SK-N-SH (cell line): ENCODE measurements at regions of chr15 and their contacts with region 1.

Region 1: GRCh38 chr15:100873029-100873677 is 6.5 kb upstream of the ALDH1A3 start:
- DNase-seq: peak; percentile 76
- H3K4me3 ChIP-seq: peak overlapping the region in 1 of 2 experiments; percentile 36; a peak in 1 of 4 replicates
- H3K27ac ChIP-seq: no peak overlapping the region; a peak in 1 of 4 replicates
- H3K4me1 ChIP-seq: peaks cover 0 to 12% of the 10 kb centered on the region in 2 experiments; a peak in 1 of 4 replicates
- H3K27me3 ChIP-seq: no peaks in the 10 kb centered on the region
- CTCF ChIP-seq: peak; percentile 91
- EP300 ChIP-seq: no peak
- RAD21 ChIP-seq: peak; percentile 83

Region 2: GRCh38 chr15:100093211-100094126 is 779.7 kb before region 1 on chr15:
- CTCF ChIA-PET with region 1: no interaction called
- POLR2A ChIA-PET with region 1: no interaction called
- DNase-seq: no peak
- H3K4me3 ChIP-seq: no peak overlapping the region
- H3K27ac ChIP-seq: no peak overlapping the region
- H3K4me1 ChIP-seq: no peaks in the 10 kb centered on the region; a peak in 1 of 4 replicates
- H3K27me3 ChIP-seq: no peaks in the 10 kb centered on the region
- CTCF ChIP-seq: no peak
- EP300 ChIP-seq: no peak
- RAD21 ChIP-seq: no peak

Region 3: DNA sequence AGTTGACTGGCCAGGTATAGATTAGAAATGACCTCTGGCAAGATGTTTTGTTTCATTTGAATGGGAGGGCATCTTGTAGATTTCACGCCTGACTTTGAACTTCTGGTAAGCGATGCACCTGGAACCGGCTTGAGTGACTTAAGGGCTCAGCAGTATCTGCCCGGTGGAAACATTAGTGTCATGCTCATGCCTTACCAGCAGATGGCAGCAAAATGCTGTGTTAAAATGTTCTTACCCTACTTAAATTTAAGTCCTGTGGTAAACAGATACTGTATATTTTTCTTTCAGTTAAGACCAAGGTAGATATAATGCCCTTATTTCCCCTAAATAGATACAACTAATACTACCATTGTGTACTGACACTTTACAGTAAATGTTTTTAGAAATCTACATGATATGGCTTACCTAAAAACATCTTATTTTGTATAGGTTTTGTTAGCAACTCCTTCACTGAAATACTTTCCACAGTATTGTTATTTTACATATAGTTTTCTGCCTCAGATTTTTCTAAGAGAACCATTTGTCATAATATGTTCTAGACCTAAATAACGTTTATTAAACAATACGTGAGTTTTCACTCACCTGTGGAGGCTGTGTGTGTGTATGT is 245.3 kb before region 1 on chr15:
- CTCF ChIA-PET with region 1: interaction called, 10 read pairs
- POLR2A ChIA-PET with region 1: no interaction called
- DNase-seq: peak; percentile 75
- H3K4me3 ChIP-seq: no peak overlapping the region
- H3K27ac ChIP-seq: no peak overlapping the region
- H3K4me1 ChIP-seq: peaks cover 0 to 7% of the 10 kb centered on the region in 2 experiments; a peak in 1 of 4 replicates
- H3K27me3 ChIP-seq: no peaks in the 10 kb centered on the region
- CTCF ChIP-seq: peak; percentile 83
- EP300 ChIP-seq: no peak
- RAD21 ChIP-seq: peak; percentile 94

Region 4: GRCh38 chr15:100759698-100760356 is 113.3 kb before region 1 on chr15:
- CTCF ChIA-PET with region 1: interaction called, 14 read pairs
- POLR2A ChIA-PET with region 1: no interaction called
- DNase-seq: peak; percentile 62
- H3K4me3 ChIP-seq: peak overlapping the region; percentile 21 to 36; a peak in 2 of 4 replicates
- H3K27ac ChIP-seq: peak overlapping the region; percentile 75 to 95
- H3K4me1 ChIP-seq: peaks cover 5 to 47% of the 10 kb centered on the region in 2 experiments; a peak in 3 of 4 replicates
- H3K27me3 ChIP-seq: no peaks in the 10 kb centered on the region
- CTCF ChIP-seq: no peak
- EP300 ChIP-seq: peak; percentile 71 to 76
- RAD21 ChIP-seq: no peak

Region 5: GRCh38 chr15:100771746-100772145 is 101.4 kb before region 1 on chr15:
- CTCF ChIA-PET with region 1: interaction called, 19 read pairs
- POLR2A ChIA-PET with region 1: no interaction called
- DNase-seq: peak; percentile 69
- H3K4me3 ChIP-seq: no peak overlapping the region
- H3K27ac ChIP-seq: peak overlapping the region; percentile 46 to 99; a peak in 3 of 4 replicates
- H3K4me1 ChIP-seq: peaks cover 0 to 78% of the 10 kb centered on the region in 2 experiments; a peak in 3 of 4 replicates
- H3K27me3 ChIP-seq: no peaks in the 10 kb centered on the region
- CTCF ChIP-seq: no peak
- EP300 ChIP-seq: no peak
- RAD21 ChIP-seq: 0 out of 2 replicates have a peak, but pooled peaks have one; percentile 5

Region 6: GRCh38 chr15:100831467-100832148 is 41.5 kb before region 1 on chr15:
- CTCF ChIA-PET with region 1: interaction called, 11 read pairs
- POLR2A ChIA-PET with region 1: no interaction called
- DNase-seq: no peak
- H3K4me3 ChIP-seq: no peak overlapping the region
- H3K27ac ChIP-seq: peak overlapping the region in 1 of 2 experiments; percentile 90; a peak in 2 of 4 replicates
- H3K4me1 ChIP-seq: peaks cover 0 to 24% of the 10 kb centered on the region in 2 experiments; a peak in 2 of 4 replicates
- H3K27me3 ChIP-seq: no peaks in the 10 kb centered on the region
- CTCF ChIP-seq: no peak
- EP300 ChIP-seq: no peak
- RAD21 ChIP-seq: no peak

Region 7: DNA sequence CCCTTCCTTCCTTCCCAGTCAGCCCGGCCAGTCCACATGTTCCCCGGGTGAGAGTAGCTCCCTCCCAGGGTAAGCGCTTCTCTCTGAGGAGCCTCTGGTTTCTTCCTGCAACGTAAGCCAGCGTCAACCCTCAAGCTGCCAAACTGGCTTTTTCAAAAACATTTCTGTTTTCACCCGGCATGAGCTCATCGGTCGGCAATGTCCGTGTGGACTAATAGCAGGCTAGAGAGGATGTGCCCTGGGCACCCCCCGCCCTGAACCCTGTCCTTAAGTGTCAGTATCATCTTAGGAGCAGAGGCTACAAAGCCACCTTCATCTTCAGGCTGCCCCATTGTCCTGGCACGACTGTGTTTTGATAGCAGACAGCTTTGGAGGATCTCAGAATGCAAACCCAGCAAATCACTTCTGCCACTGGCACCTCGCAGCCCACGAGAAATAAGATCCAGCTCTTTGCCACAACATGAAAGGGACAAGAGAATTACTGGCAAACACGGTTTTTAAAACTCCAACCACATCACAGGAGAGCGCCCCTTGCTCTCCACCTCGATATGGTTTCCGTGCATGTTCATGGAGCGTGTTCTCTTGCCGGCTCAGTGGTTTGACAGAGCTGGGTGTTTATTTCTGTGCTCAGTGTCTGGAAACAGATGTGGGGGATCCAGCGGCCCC is 16.4 kb after region 1 on chr15:
- CTCF ChIA-PET with region 1: interaction called, 12 read pairs
- POLR2A ChIA-PET with region 1: no interaction called
- DNase-seq: no peak
- H3K4me3 ChIP-seq: no peak overlapping the region
- H3K27ac ChIP-seq: no peak overlapping the region
- H3K4me1 ChIP-seq: peaks cover 0 to 9% of the 10 kb centered on the region in 2 experiments; a peak in 1 of 4 replicates
- H3K27me3 ChIP-seq: no peaks in the 10 kb centered on the region
- CTCF ChIP-seq: no peak
- EP300 ChIP-seq: no peak
- RAD21 ChIP-seq: no peak